ENCODE measurements at regions of chr2 and their contacts with region 1.

Region 1: GRCh38 chr2:174771631-174772471 is 7.6 kb upstream of the CHRNA1 start:
- DNase-seq: peak; percentile 74 to 97 (median 84)

Region 2: GRCh38 chr2:174682578-174683391 is 89.1 kb before region 1 on chr2:
- intact Hi-C with region 1: no loop called
- DNase-seq: peak; percentile 40 to 93 (median 66)

Region 3: GRCh38 chr2:174846941-174847938 is 75.4 kb after region 1 on chr2:
- intact Hi-C with region 1: loop called (anchors 5 kb)
- DNase-seq: peak in 7 of 10 donors; percentile 16 to 89 (median 45)

Region 4: GRCh38 chr2:174901075-174901474 is 129.2 kb after region 1 on chr2:
- intact Hi-C with region 1: loop called (anchors 10 kb)
- DNase-seq: peak in 5 of 10 donors; percentile 21 to 78 (median 42)

Region 5: GRCh38 chr2:174985630-174986029 is 213.8 kb after region 1 on chr2:
- intact Hi-C with region 1: loop called (anchors 1 kb)
- DNase-seq: no peak

Region 6: GRCh38 chr2:176554101-176555048 is 1782.5 kb after region 1 on chr2:
- intact Hi-C with region 1: no loop called
- DNase-seq: peak in 7 of 10 donors; percentile 8 to 74 (median 26)

Measured in posterior cingulate gyrus (tissue), 11 donors.